Esophagus muscularis mucosa (tissue), 4 donors: ENCODE measurements at regions of chr2 and their contacts with region 1.

Region 1: GRCh38 chr2:113138428-113139322 is 11.3 kb downstream of the IL1RN start:
- DNase-seq: no peak
- H3K4me3 ChIP-seq: no peak overlapping the region
- H3K27ac ChIP-seq: no peak overlapping the region
- H3K4me1 ChIP-seq: peaks cover 0 to 6% (median 2%) of the 10 kb centered on the region in 4 donors
- H3K27me3 ChIP-seq: no peaks in the 10 kb centered on the region
- CTCF ChIP-seq: peak; percentile 71 to 81 (median 76)
- EP300 ChIP-seq: no peak
- POLR2A ChIP-seq: no peak

Region 2: GRCh38 chr2:113197347-113198047 is 58.8 kb after region 1 on chr2:
- intact Hi-C with region 1: loop called (anchors 2 kb)
- DNase-seq: no peak
- H3K4me3 ChIP-seq: no peak overlapping the region
- H3K27ac ChIP-seq: no peak overlapping the region
- H3K4me1 ChIP-seq: peaks cover 7 to 21% (median 20%) of the 10 kb centered on the region in 4 donors
- H3K27me3 ChIP-seq: no peaks in the 10 kb centered on the region
- CTCF ChIP-seq: no peak
- EP300 ChIP-seq: no peak
- POLR2A ChIP-seq: no peak